ENCODE measurements at regions of chr10 and their contacts with region 1.

Region 1: DNA sequence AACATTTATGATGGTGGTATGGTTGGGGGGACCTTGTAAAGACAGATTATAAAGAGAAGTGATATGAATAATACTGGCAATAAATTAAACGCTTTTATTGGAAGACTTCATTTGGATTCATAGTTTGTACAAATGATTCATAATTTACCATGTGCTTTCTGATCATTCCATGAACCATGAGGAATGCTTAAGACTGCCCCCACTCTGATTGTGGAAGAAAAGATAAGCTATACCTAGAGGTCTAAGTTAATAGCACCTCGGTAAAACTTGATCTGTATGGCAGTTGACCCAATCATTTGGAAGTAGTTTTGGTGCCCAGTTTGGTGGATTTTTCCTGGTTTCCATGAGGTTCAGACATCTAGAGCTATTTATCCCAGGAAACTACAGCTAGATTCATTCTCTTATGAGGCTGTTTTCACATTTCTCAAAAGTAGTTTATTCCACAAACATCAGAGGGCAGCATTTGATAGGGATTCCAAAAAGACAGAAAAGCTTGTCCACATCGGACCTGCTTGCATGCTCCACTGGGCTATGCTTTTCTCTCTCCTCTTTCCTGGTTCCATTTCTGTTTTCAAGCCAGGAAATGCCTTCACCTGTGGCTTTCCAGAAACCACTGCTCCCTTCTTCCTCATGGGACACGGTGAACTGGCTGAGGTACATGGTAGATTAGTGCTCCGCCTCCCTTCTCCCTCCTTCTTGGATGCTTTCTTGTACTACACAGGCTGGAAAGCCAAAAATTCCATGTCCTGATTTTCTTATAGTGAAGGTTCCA is 29.2 kb downstream of the TFAM start:
- DNase-seq: peak in 1 of 2 donors; percentile 13
- ATAC-seq: peak in 7 of 8 donors; percentile 64 to 78 (median 69)
- H3K4me3 ChIP-seq: no peak overlapping the region
- H3K27ac ChIP-seq: peak overlapping the region in 1 of 10 donors; percentile 25
- H3K4me1 ChIP-seq: peaks cover 0 to 7% (median 0%) of the 10 kb centered on the region in 9 donors
- H3K27me3 ChIP-seq: peaks cover 0 to 3% (median 0%) of the 10 kb centered on the region in 7 donors
- CTCF ChIP-seq: peak in 7 of 9 donors; percentile 22 to 50 (median 46)

Region 2: GRCh38 chr10:58502956-58503355 is 88.5 kb after region 1 on chr10:
- intact Hi-C with region 1: no loop called
- DNase-seq: no peak
- ATAC-seq: no peak
- H3K4me3 ChIP-seq: no peak overlapping the region
- H3K27ac ChIP-seq: no peak overlapping the region
- H3K4me1 ChIP-seq: no peaks in the 10 kb centered on the region
- H3K27me3 ChIP-seq: peaks cover 0 to 4% (median 0%) of the 10 kb centered on the region in 7 donors
- CTCF ChIP-seq: no peak

Region 3: DNA sequence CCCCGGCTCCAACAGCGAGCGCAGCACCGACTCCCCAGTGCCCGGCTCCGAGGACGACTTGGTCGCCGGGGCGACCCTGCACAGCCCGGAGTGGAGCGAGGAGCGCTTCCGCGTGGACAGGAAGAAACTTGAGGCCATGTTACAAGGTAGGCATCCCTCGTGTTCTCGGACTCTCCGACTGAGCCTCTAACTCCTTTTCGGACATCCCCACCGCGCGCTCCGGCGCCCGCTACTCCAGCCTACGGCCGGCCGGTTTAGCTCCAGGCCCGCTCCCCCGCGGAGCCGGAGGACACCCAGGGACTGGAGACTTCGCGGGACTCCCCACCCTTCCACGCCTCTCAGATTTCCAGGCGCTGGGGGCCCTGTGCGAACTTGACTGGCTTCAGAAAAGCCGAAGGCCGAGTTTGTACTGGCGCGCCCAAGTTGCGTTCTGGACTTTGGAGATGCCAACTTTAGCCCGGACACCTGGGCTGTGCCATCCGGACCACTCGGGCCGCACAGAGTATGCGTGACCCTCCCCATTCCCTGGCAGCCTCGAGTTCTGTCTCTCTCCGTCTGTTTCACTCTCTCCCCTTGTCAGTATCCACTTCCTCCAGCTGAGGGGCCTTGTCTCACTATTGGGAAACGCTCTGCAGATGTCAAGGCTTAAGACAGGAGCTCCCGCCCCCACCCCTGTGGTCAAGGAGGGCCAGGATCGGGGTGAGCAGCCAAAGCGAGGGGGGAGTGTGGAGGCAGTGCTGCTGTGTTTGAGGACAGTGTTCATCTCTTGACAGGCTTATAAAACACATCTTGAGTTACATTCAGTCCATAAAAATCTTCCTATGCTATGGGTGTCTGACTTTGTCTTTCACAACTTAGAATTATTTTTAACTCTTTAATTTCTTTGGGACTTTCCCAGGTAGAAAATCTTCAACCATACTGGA is 99.0 kb after region 1 on chr10:
- intact Hi-C with region 1: loop called in 1 of 10 experiments (anchors 5 kb)
- DNase-seq: peak; percentile 50 to 53
- ATAC-seq: peak; percentile 74 to 85 (median 80)
- H3K4me3 ChIP-seq: peak overlapping the region; percentile 26 to 69 (median 64)
- H3K27ac ChIP-seq: peak overlapping the region; percentile 50 to 89 (median 80)
- H3K4me1 ChIP-seq: peaks cover 0 to 11% (median 0%) of the 10 kb centered on the region in 9 donors
- H3K27me3 ChIP-seq: peaks cover 0 to 56% (median 25%) of the 10 kb centered on the region in 7 donors
- CTCF ChIP-seq: no peak

Measured in heart right ventricle (tissue), 16 donors.